GM13976 (cell line): ENCODE measurements at regions of chr7 and their contacts with region 1.

Region 1: DNA sequence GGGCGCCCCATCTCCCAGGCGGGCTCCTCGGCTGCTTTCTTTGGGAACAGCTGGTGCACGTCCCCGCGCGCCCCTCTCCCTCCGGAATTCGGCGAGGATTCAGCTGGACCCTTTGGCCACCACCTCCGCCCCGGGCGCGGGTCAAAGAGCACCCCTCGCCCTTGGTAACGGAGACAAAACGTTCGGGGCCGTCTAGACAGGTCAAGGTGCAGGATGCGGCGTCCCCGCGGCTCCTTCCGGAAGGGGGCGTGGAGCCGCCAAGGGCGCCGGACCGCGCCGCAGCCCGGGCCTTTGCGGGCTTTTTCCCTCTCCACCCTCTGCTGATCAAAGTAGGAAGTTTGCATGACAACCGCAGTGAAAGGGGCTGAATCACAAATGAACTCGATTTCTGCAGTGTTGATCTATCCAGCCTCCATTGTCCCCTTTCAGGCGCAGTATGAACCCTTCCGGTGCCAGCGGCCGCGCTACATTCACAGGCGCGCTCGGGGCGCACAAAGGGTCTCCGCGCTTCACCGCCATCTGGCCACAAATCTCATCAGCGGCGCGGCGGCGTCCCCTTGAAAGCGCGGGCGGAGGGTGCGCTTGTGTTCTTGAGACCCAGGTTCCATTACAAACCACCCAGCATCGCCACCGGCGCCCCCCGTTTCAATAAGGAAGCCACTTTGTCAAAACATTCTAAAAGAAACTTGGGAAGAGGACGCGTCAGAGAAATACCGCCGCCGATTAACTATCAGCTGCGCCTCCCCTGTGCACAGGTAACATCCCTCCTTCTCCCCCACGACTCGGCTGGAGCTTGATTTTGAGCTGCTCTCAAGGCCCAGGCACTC is 36.4 kb downstream of the CNPY1 start:
- DNase-seq: no peak
- CTCF ChIP-seq: no peak

Region 2: GRCh38 chr7:154684666-154685563 is 825.0 kb before region 1 on chr7:
- in situ Hi-C with region 1: no loop called
- DNase-seq: no peak
- CTCF ChIP-seq: no peak

Region 3: DNA sequence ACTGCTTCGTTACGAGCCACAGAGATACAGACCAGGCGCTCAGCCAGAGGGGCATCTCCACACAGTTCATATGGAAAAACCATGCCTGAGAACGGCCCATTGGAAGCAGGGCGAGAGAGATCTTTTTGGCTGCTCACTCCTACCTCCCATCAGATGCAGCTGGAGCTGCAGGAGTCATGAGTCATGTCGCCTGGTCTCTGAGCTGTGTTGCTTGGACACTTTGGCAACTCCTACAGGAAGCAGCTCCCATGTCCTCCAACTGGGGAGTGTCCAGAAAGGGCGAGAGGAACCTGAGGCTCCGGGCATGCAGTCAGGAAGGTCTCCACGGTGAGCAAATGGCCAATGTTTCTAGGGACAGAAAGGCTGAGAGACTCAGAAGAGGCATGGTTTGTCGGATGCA is 187.4 kb before region 1 on chr7:
- in situ Hi-C with region 1: no loop called
- DNase-seq: no peak
- CTCF ChIP-seq: no peak

Region 4: DNA sequence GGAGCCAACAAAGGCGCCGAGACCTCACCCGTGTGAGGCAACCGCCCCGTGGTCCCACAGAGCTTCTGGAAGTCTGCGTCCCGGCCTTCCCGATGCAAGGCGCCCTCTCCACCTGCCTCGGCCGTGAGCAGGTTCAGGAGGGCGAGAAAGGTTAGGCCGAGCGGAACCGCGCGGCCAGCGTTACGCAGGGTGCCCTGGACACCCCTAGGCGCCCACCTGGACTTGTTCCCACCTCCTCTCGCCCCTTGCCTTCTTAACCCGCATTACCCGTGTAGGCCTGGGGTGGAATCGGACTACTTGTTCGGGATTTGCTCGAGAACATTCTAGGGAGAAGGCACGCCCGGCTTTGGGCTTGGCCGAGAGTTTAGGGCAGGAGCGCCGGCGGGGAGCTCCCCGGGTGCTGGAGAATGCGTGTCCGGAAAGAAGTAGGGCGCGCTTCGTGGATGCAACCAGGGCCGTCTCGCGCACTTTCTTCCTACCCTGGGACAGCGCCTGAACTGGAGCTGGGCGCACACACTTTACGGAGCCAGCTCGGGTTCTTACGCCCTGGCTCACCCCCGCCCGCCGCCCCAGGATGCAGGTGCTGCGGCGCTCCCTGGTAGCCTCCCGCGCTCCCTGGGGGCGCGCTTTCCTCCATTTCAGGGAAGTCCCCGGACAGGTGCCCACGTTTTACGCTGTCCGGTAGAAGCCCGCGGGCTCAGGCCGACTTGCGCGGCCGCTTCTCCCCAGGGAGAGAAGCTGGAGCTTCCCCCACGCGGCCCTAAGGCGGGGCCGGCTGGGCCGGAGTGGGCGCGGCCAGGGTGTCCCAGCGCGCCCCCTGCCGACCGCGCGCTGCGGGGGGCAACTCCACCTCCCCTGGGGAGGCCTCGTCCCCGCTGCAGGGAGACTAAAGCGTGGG is 137.8 kb before region 1 on chr7:
- in situ Hi-C with region 1: loop called (anchors 10 kb)
- DNase-seq: peak; percentile 77
- CTCF ChIP-seq: peak; percentile 58

Region 5: GRCh38 chr7:155405399-155406318 is 104.3 kb before region 1 on chr7:
- in situ Hi-C with region 1: no loop called
- DNase-seq: no peak
- CTCF ChIP-seq: no peak